ENCODE measurements at regions of chr20 and their contacts with region 1.

Region 1: GRCh38 chr20:49982346-49983122 is at the start of gene SNAI1:
- DNase-seq: peak; percentile 75 to 92 (median 80)
- H3K4me3 ChIP-seq: peak within 1 kb of the TSS; percentile 67
- H3K4me3 Mint-ChIP-seq: peak within 1 kb of the TSS; percentile 66 to 78 (median 74)
- H3K27ac ChIP-seq: peak within 1 kb of the TSS; percentile 67
- H3K27ac Mint-ChIP-seq: peak within 1 kb of the TSS in 7 of 8 donors; percentile 43 to 97 (median 80)
- H3K4me1 ChIP-seq: peaks cover 24% of the 10 kb centered on the region
- H3K4me1 Mint-ChIP-seq: peaks cover 18 to 39% (median 26%) of the 10 kb centered on the region in 3 donors
- H3K27me3 ChIP-seq: no peaks in the 10 kb centered on the region
- H3K27me3 Mint-ChIP-seq: peaks cover 2 to 3% of the 10 kb centered on the region in 2 donors
- total RNA-seq, gene SNAI1: 0.42 to 0.49 TPM

Region 2: DNA sequence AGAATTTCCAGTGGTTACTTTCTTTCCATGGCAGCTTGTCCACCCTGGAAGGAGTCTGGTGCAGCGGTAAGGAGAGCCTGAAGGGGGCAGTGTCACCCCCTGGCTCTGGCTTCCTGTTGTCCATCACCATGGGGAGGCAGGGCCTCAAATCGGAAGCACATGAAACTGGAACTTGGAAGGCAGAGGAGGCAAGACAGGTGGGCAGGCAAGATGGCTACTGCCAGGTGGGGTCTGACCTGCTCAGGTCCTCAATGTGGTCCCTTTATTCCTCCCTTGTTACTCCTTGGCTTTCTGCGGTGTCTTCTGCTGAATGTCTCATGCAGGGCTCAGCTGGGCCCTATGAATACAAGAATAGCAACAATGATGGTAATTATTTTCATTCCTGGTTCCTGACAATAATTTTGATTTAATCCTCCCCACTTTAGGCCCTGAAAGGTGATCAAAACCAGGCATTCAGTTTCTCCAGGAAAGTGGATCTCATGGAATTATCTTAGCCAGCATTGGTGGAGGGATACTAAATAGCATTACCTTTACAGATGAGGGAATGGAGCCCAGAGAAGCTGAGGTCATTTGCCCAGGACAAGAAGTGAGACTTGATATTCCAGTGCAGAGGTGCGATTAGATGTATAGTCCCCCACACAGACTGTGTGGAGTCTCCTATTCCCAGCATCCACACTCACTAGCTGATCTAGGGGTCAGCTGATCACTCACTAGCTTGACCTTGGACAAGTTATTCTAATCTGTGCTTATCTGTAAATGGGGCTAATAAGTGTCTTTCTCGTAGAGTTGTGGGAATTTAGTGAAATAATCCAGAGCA is 17.4 kb before region 1 on chr20:
- CTCF ChIA-PET with region 1: interaction called, 25 read pairs
- POLR2A ChIA-PET with region 1: no interaction called
- DNase-seq: no peak
- H3K4me3 ChIP-seq: no peak overlapping the region
- H3K4me3 Mint-ChIP-seq: no peak overlapping the region
- H3K27ac ChIP-seq: no peak overlapping the region
- H3K27ac Mint-ChIP-seq: peak overlapping the region in 1 of 8 donors; percentile 15
- H3K4me1 ChIP-seq: no peaks in the 10 kb centered on the region
- H3K4me1 Mint-ChIP-seq: no peaks in the 10 kb centered on the region
- H3K27me3 ChIP-seq: no peaks in the 10 kb centered on the region
- H3K27me3 Mint-ChIP-seq: peaks cover 0 to 5% of the 10 kb centered on the region in 2 donors

Region 3: DNA sequence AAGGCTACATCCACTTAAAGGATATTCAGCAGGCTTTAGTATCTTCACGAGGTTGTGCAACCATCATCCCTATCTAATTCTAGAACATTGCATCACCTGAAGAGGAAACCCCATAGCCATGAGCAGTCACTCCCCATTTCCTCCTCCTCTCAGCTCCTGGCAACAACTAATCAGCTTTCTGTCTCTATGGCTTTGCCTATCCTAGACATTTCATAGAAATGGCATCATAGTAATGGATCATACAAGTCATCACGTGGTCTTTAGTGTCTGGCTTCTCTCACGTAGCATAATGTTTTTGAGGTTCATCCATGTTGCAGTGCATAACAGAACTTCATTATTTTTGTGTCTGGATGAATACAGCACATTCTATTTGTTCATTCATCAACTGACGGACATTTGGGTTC is 20.7 kb after region 1 on chr20:
- CTCF ChIA-PET with region 1: no interaction called
- POLR2A ChIA-PET with region 1: no interaction called
- DNase-seq: no peak
- H3K4me3 ChIP-seq: no peak overlapping the region
- H3K4me3 Mint-ChIP-seq: no peak overlapping the region
- H3K27ac ChIP-seq: no peak overlapping the region
- H3K27ac Mint-ChIP-seq: peak overlapping the region in 1 of 8 donors; percentile 12
- H3K4me1 ChIP-seq: no peaks in the 10 kb centered on the region
- H3K4me1 Mint-ChIP-seq: peaks cover 0 to 2% (median 0%) of the 10 kb centered on the region in 3 donors
- H3K27me3 ChIP-seq: no peaks in the 10 kb centered on the region
- H3K27me3 Mint-ChIP-seq: peaks cover 18 to 35% of the 10 kb centered on the region in 2 donors

Region 4: DNA sequence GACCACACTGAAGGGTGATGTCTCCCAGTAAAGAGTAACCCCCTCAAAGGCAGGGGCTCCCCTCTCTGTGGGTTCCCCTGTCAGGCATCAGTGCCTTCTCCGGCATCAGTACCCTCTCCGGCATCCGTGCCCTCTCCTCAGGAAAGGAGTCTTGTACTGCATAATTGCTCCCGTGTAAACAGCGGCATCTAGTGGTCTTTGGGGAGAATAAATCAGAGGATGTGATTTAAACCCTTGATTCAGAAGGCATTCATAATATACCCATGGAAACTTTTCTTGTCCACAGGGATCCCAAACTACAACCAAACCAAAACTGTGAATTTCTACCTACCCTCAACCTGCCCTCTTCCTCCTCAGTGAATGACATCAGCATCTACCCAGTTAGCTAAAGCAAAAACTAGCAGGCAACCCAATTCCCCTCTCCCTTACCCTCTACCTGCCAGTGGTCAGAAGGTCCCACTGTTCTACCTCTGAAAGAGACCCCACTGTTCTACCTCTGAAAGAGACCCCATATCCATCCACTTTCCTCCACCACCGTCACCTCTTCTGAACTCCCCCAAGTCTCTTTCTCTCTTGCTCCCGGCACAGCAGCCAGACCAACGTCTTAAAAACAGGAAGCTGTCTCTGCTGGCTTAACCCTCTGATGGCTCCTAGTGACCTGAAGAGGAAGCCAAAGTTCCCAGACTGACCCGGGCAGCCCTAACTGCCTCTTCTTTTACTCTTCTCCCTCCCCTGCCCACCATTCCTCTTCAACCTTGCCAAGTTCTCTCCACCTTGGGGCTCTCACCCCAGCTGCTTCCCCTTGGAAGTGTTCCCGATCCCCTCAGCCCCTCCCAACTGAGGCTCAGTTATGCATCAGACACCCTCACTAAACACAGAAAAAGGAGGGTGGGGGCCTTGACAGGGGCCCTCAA is 103.2 kb after region 1 on chr20:
- CTCF ChIA-PET with region 1: interaction called, 28 read pairs
- POLR2A ChIA-PET with region 1: no interaction called
- DNase-seq: peak in 3 of 5 donors; percentile 13 to 53 (median 26)
- H3K4me3 ChIP-seq: peak overlapping the region; percentile 44
- H3K4me3 Mint-ChIP-seq: peak overlapping the region; percentile 23 to 92 (median 82)
- H3K27ac ChIP-seq: no peak overlapping the region
- H3K27ac Mint-ChIP-seq: peak overlapping the region; percentile 37 to 93 (median 81)
- H3K4me1 ChIP-seq: peaks cover 15% of the 10 kb centered on the region
- H3K4me1 Mint-ChIP-seq: peaks cover 27 to 49% (median 34%) of the 10 kb centered on the region in 3 donors
- H3K27me3 ChIP-seq: no peaks in the 10 kb centered on the region
- H3K27me3 Mint-ChIP-seq: no peaks in the 10 kb centered on the region